ENCODE measurements at regions of chr9 and their contacts with region 1.

Region 1: DNA sequence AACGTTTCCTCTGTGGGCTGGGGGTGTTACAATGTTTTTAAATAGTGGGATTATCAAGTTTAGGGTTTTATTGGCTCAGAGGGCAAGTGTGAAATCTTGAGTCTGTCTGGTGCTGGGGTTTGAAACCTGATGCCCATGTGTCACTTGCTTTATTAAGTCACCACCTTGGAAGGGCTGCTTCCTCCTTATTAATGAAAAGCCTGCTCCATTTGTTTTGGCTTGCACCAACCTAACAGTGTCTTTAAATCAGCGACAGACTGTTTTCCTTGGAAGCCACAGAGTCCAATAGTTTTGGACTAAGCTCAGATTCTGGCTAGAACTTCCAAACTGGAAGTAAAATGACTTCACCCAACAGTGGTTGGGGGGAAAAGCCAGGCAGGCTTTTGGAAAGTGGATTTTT is 10.7 kb upstream of the PALM2AKAP2 start:
- DNase-seq: no peak
- ATAC-seq: peak; percentile 18 to 69 (median 52)
- H3K4me3 ChIP-seq: no peak overlapping the region
- H3K27ac ChIP-seq: no peak overlapping the region
- H3K4me1 ChIP-seq: peaks cover 0 to 37% (median 21%) of the 10 kb centered on the region in 12 donors
- H3K27me3 ChIP-seq: no peaks in the 10 kb centered on the region
- CTCF ChIP-seq: no peak
- POLR2A ChIP-seq: no peak

Region 2: DNA sequence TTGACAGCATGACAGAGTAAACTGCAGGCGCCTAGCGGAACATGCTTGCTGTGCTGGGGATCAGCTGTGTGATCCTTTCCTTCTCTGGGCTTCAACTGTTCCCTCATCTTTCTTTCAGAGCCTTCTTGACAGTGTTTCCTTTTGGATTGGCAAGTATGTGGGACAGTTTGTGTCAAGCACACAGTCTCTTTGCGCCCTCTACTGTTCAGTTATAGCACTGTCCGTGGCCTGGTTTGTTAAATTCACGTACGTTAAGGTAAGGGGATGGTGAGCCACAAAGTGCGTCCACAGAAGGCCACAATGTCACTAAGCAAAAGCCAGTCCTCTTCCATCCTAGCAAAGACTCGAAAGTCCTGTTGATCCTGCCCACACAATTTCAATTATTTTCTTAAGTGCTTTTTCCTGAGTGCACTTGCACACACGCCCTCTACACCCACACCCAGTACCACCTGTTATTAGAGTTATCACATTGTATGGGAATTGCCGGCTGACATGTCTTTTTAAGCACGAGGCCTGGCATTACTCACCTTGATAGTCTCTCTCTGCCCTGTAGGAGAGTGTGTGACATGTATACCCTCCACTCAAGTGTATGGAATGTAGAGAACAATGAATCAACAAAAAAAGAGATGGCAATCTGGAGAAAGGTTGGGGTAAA is 248.6 kb before region 1 on chr9:
- intact Hi-C with region 1: no loop called
- DNase-seq: peak in 3 of 5 donors; percentile 36 to 40 (median 39)
- ATAC-seq: peak; percentile 46 to 92 (median 86)
- H3K4me3 ChIP-seq: no peak overlapping the region
- H3K27ac ChIP-seq: no peak overlapping the region
- H3K4me1 ChIP-seq: no peaks in the 10 kb centered on the region
- H3K27me3 ChIP-seq: peaks cover 0 to 2% (median 0%) of the 10 kb centered on the region in 9 donors
- CTCF ChIP-seq: peak; percentile 66 to 89 (median 84)
- POLR2A ChIP-seq: no peak

Region 3: DNA sequence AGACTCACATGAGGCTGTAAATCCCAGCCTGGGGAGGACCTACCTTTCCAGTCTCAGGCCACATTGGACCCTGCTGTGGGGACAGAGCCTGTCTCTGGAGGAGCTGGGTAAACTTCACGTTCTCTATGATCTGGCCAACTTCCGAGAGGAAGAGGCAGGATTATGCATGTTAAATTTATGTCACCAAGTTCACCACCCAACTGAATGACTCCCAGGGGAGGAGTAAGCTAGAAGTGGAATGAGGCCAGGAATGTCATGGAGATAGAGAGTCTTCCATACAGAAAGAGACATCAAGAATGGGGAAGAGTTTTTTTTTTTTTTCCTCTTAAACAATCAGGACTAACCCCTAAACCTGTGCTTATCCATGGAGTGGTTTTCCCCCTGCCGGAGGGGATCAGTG is 79.5 kb before region 1 on chr9:
- intact Hi-C with region 1: no loop called
- DNase-seq: no peak
- ATAC-seq: no peak
- H3K4me3 ChIP-seq: no peak overlapping the region
- H3K27ac ChIP-seq: no peak overlapping the region
- H3K4me1 ChIP-seq: no peaks in the 10 kb centered on the region
- H3K27me3 ChIP-seq: no peaks in the 10 kb centered on the region
- CTCF ChIP-seq: no peak
- POLR2A ChIP-seq: no peak

Region 4: DNA sequence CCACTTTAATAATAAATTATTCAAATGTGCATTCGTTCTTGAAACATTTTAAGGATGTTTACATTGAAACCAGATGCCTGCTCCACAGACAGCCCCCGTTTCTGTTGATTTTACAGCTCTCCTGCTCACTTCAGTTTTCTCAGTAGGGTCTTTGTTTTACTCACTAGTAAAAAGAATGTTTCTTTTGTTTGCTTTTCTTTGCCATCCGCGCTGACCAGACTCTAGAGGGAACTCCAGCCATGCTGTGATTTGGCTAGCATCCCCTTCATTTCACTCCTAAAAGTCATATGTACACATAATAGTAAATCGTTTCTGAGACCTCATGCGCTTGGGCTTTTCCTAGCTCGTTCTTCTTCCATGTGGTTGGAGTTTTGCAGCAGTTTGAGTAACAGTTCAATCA is 18.0 kb before region 1 on chr9:
- intact Hi-C with region 1: loop called in 1 of 10 experiments (anchors 2 kb)
- DNase-seq: no peak
- ATAC-seq: no peak
- H3K4me3 ChIP-seq: no peak overlapping the region
- H3K27ac ChIP-seq: no peak overlapping the region
- H3K4me1 ChIP-seq: peaks cover 0 to 7% (median 2%) of the 10 kb centered on the region in 12 donors
- H3K27me3 ChIP-seq: no peaks in the 10 kb centered on the region
- CTCF ChIP-seq: no peak
- POLR2A ChIP-seq: no peak

Measured in heart left ventricle (tissue), 16 donors.